GM10248 (cell line): ENCODE measurements at regions of chr1 and their contacts with region 1.

Region 1: DNA sequence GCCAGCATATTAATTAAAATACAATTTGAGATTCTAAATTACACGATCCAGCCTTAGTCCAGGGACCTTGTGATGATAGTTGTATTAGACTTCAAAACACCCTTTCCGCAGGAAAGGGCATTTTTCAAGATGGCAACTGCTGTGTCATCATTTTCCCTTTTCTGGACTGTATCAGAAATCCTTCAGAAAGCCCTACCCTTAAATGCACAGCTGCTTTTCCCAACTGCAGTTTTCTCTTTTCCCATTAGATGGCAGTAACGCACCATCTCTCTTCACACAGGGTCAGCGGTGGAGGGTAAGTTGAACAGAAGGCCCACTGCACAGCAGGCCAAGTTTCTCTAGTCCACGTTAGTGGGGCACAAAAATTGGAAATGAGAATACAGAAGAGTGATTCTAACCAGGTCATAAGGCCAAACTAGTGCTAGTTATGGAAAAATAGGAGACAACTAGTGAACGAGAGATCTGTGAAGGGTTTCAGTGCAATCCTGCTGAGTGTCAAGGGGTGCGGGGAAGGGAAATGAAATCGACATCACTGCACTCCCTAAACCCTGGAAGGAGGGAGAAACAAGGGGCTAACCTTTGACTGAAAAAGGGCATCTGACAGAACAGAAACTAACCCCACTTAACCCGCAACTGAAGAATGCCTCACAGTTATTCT is 22.1 kb upstream of the TDRD10 start:
- DNase-seq: peak; percentile 74
- CTCF ChIP-seq: peak; percentile 81

Region 2: GRCh38 chr1:154352581-154353459 is 127.1 kb before region 1 on chr1:
- CTCF ChIA-PET with region 1: interaction called, 10 read pairs
- POLR2A ChIA-PET with region 1: no interaction called
- DNase-seq: peak; percentile 60
- CTCF ChIP-seq: peak; percentile 22

Region 3: GRCh38 chr1:154463512-154463990 is 16.3 kb before region 1 on chr1:
- CTCF ChIA-PET with region 1: interaction called, 43 read pairs
- POLR2A ChIA-PET with region 1: no interaction called
- DNase-seq: no peak
- CTCF ChIP-seq: no peak

Region 4: DNA sequence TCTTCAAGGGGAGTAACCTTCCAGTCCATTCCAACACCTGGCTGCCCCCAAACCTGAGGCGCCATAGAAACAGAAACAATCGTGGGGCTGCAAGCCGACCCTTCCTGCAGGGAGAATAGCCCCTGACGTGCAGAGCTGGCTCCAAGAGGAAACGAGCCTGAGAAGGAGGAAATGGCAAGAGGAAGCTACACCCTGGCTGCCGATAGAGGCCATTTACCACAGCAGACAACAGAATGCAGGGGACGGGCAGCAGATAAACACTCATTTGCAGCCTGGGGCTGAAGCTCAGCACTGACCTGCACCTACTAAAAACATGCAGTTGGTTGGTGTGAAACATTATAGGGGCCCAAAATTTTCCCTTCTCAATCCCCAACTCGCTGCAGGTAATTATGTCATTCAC is 13.4 kb after region 1 on chr1:
- CTCF ChIA-PET with region 1: interaction called, 65 read pairs
- POLR2A ChIA-PET with region 1: no interaction called
- DNase-seq: no peak
- CTCF ChIP-seq: no peak

Region 5: GRCh38 chr1:154501423-154502065 is 21.7 kb after region 1 on chr1:
- CTCF ChIA-PET with region 1: interaction called, 65 read pairs
- POLR2A ChIA-PET with region 1: no interaction called
- DNase-seq: peak; percentile 40
- CTCF ChIP-seq: no peak

Region 6: GRCh38 chr1:154517661-154518060 is 37.8 kb after region 1 on chr1:
- CTCF ChIA-PET with region 1: interaction called, 10 read pairs
- POLR2A ChIA-PET with region 1: no interaction called
- DNase-seq: no peak
- CTCF ChIP-seq: no peak

Region 7: GRCh38 chr1:154533952-154534844 is 54.3 kb after region 1 on chr1:
- CTCF ChIA-PET with region 1: interaction called, 60 read pairs
- POLR2A ChIA-PET with region 1: no interaction called
- DNase-seq: peak; percentile 38
- CTCF ChIP-seq: peak; percentile 10

Region 8: DNA sequence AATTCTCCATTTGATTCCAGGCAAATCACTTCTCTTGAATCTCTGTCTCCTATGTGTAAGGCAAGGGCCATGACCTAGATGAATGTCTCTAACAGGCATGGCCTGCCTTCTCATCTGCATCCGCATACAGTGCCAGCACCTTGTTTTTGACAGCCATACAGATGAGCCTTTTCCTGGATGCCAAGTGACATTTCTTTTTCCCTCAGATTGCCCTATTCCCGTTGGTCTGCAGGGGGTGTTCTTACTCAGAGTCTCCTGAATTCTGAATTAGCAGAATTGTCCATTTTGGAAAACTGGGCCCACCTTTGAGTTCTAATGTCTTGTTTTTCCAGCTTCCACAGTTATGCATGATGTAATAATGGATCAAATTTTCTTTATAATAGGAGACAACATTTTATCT is 216.1 kb after region 1 on chr1:
- CTCF ChIA-PET with region 1: no interaction called
- POLR2A ChIA-PET with region 1: no interaction called
- DNase-seq: no peak
- CTCF ChIP-seq: peak; percentile 16